ENCODE measurements at regions of chr20 and their contacts with region 1.

Region 1: DNA sequence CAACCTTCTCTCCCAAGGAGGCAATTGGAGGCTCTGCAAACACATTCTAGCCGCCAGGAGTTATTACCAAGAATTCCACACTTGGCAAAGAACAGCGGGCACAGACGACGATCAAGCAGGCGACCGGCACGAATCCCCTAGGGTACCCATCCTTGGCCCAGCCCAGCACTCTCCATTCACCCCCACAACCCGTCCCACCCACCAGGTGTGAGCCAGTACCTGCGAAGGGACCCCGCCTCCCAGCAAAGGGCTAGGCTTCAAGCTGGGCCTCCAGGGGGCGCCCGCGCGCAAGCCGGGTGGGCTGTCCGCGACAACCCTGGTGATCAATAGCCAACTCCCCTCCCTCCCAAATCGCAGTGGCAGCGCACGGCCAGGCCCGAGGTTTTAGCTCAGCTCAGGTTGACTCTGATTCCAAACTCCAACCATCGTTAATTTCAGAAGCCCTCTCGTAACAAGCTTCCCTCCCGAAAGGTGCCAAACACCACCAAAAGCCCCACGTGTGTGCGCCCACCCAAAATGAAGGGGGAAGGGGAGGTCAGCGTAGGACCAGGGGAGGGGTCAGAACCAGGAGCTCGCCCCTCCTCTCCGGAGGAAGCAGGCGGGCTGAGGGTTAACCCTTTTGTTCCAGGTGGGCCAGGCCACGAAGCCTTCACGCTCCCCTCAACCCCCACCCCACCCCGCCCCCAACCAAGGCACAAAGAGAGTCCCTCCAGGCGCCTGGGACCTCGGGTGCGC is 2.1 kb downstream of the SALL4 start:
- DNase-seq: peak; percentile 58 to 66 (median 59)
- H3K4me3 ChIP-seq: peak overlapping the region; percentile 33 to 85 (median 66)
- H3K27ac ChIP-seq: no peak overlapping the region
- H3K4me1 ChIP-seq: peaks cover 5 to 35% (median 29%) of the 10 kb centered on the region in 4 experiments
- H3K27me3 ChIP-seq: peaks cover 0 to 12% (median 7%) of the 10 kb centered on the region in 5 experiments

Region 2: GRCh38 chr20:51966291-51966971 is 166.2 kb after region 1 on chr20:
- CTCF ChIA-PET with region 1: interaction called, 18 read pairs
- POLR2A ChIA-PET with region 1: no interaction called
- DNase-seq: peak; percentile 47 to 61 (median 57)
- H3K4me3 ChIP-seq: no peak overlapping the region
- H3K27ac ChIP-seq: no peak overlapping the region
- H3K4me1 ChIP-seq: peaks cover 0 to 2% (median 0%) of the 10 kb centered on the region in 4 experiments
- H3K27me3 ChIP-seq: no peaks in the 10 kb centered on the region

Measured in common myeloid progenitor, CD34-positive (primary cell).